Activated CD8-positive, alpha-beta memory T cell treated with anti-CD3 and anti-CD28 coated beads, Interleukin-2, amount 10 ng/mL, durations not matched to agents 7 days and 5 days (primary cell): ENCODE measurements at regions of chr6 and their contacts with region 1.

Region 1: DNA sequence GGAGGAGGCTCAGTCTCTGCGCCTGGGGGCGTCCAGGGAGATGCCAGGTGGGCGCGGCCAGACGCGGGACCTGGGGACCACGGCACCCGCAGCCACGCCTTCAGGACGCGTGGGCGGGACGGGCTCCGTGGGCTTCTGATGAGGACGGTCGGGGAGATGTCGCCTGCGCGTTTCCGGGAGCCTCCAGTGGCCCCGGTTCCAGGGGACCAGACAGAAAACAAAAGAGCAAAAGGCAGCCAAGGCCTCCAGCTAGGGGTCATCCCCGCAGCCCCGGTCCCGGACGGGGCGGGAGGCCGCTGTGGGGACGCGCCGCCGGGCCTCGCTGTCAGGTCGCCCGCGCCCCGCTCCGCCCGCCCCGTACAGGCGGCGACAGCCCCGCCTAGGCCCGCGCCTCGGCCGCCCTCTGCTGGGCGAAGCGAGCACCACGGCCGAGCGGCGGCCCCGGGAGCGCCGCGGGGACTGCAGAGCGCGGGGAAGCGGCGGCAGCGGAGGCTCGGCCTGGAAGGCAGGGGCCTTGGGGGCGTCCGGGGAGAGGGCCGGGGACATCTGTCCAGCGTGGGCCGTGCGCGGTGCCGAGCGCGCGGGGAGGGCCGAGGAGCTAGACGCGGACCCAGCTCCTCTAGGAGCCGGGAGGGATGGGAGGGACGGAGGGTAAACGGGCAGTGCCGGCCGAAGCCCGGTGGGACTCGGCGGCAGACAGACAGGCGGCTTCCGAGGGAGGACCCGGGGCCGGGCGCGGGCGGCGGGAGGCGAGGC is 48.7 kb downstream of the TMEM242 start:
- DNase-seq: peak; percentile 78
- ATAC-seq: peak; percentile 95
- H3K4me3 Mint-ChIP-seq: peak overlapping the region; percentile 78
- H3K27ac Mint-ChIP-seq: peak overlapping the region; percentile 67
- H3K4me1 Mint-ChIP-seq: peaks cover 9% of the 10 kb centered on the region
- H3K27me3 Mint-ChIP-seq: peaks cover 54% of the 10 kb centered on the region

Region 2: DNA sequence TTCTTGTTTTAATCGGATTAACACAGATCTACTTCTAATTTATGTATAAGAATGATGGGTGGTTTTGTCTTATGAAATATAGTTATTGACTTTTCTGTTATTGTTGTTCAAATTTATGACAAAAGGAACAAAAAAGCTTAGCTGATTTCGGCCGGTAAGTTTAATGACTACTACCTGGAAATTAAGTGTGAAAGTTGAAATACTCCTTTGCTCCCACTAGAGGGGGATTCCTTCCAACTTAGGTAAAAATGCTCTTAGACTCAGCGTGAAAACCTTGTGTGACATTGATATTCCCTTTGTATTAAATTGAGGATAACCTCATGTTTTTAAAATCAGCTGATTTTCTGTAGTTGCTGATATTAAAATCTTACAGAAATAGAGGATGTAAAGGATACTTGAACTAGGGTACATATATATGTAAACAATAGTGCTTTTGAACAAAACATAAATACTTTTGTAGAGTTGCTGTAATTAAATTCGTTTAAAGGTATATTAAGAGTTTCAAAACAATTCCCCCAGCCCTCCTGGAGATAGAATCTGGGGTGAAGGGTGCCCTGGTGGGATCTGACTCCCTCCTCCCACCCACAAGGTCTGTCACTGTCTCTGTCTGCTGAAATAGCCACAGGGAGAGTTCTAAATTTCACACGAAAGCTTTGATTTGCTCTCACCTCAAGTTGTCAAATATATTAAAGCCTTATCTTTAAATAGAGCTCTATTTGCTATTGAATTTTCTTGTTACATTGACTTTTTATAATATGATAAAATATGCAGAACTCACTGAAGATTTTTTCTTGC is 240.0 kb before region 1 on chr6:
- CTCF ChIA-PET with region 1: interaction called, 13 read pairs
- DNase-seq: no peak
- ATAC-seq: peak; percentile 68
- H3K4me3 Mint-ChIP-seq: peak overlapping the region; percentile 43
- H3K27ac Mint-ChIP-seq: peak overlapping the region; percentile 54
- H3K4me1 Mint-ChIP-seq: peaks cover 16% of the 10 kb centered on the region
- H3K27me3 Mint-ChIP-seq: no peaks in the 10 kb centered on the region

Region 3: DNA sequence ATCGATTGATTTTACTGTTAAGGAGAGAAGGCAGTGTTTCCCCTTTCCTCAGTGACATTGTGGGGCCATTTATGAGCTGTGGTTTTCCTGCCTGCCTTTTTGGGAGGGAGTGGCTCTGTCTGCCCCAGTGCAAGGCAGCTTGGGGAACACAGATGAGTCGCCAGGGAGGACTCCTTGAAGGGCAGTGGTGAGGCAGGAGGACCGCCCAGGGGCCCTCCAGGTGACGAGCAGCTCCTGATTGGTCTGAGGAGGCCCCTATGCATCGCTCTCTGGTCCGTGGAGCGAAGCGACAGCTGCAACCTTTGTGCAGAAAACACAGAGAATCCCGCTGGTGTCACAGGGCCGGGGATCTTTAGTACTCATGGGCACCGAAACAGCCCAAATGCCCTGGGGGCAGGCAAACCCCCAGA is 51.6 kb before region 1 on chr6:
- CTCF ChIA-PET with region 1: interaction called, 13 read pairs
- DNase-seq: peak; percentile 77
- ATAC-seq: peak; percentile 63
- H3K4me3 Mint-ChIP-seq: peak overlapping the region; percentile 0
- H3K27ac Mint-ChIP-seq: peak overlapping the region; percentile 58
- H3K4me1 Mint-ChIP-seq: peaks cover 41% of the 10 kb centered on the region
- H3K27me3 Mint-ChIP-seq: peaks cover 2% of the 10 kb centered on the region

Region 4: GRCh38 chr6:157235600-157236039 is 39.0 kb before region 1 on chr6:
- CTCF ChIA-PET with region 1: interaction called, 12 read pairs
- DNase-seq: peak; percentile 54
- ATAC-seq: peak; percentile 78
- H3K4me3 Mint-ChIP-seq: peak overlapping the region; percentile 76
- H3K27ac Mint-ChIP-seq: no peak overlapping the region
- H3K4me1 Mint-ChIP-seq: peaks cover 16% of the 10 kb centered on the region
- H3K27me3 Mint-ChIP-seq: peaks cover 58% of the 10 kb centered on the region

Region 5: DNA sequence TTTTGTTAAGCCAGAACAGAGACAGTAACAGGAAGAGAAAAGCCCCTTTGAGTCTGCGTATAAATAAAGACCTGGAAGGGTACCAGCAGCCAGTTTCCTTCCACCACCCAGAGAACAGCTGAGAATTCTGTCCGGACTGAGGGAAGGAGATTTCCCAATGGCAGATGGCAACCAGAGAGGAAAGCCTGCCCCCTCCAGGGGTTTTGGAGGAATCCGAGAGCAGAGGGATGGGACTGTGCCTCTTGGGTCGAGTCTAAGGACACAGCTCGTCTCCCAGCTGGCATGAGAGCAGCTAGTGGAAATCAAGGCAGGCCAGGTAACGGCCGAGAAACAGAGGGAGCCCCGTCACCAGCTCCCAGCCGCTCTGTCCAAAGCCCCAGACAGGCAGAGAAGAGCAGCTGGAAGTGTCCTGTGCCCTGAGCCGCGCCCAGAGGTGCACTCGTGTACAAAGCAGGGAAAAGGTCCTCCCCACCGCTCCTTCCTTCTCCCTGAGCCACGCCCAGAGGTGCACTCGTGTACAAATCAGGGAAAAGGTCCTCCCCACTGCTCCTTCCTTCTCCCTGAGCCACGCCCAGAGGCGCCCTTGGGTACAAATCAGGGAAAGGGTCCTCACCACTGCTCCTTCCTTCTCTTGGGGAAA is 414.4 kb after region 1 on chr6:
- CTCF ChIA-PET with region 1: no interaction called
- DNase-seq: no peak
- ATAC-seq: no peak
- H3K4me3 Mint-ChIP-seq: no peak overlapping the region
- H3K27ac Mint-ChIP-seq: no peak overlapping the region
- H3K4me1 Mint-ChIP-seq: no peaks in the 10 kb centered on the region
- H3K27me3 Mint-ChIP-seq: peaks cover 25% of the 10 kb centered on the region